ENCODE measurements at regions of chr6 and their contacts with region 1.

Region 1: DNA sequence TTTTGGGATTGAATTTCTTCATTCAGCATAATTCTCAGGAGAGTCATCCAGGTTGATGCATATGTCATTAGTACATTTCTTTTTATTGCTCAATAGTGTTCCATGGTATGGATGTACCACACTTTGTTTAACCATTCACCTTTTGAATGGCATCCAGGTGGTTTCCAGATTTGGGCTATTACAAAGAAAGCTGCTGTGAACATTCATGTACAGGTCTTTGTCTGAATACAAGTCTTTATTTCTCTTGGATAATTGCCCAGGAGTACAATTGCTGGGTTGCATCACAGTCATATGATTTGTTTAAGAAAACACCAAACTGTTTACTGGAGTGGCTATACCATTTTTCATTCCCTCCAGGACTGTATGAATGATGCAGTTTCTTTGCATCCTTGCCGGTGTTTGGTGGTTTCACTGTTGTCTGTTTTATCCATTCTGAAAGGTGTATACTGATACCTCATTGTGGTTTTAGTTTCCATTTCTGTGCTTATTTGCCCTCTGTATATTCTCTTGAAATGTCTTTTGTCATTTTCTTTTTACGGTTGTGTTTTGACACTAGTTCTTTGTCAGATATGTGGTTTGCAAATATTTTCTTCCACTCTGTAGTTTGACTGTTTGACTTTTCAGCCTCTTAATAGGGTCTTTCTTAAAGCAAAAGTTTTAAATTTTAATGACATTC is 8.8 kb downstream of the CDKAL1 start:
- DNase-seq: peak; percentile 44
- H3K4me3 Mint-ChIP-seq: no peak overlapping the region
- H3K27ac Mint-ChIP-seq: peak overlapping the region; percentile 42
- H3K4me1 Mint-ChIP-seq: peaks cover 44% of the 10 kb centered on the region
- H3K27me3 Mint-ChIP-seq: no peaks in the 10 kb centered on the region

Region 2: GRCh38 chr6:19193624-19194023 is 1349.4 kb before region 1 on chr6:
- CTCF ChIA-PET with region 1: no interaction called
- POLR2A ChIA-PET with region 1: no interaction called
- intact Hi-C with region 1: no loop called
- DNase-seq: no peak
- H3K4me3 Mint-ChIP-seq: no peak overlapping the region
- H3K27ac Mint-ChIP-seq: no peak overlapping the region
- H3K4me1 Mint-ChIP-seq: no peaks in the 10 kb centered on the region
- H3K27me3 Mint-ChIP-seq: no peaks in the 10 kb centered on the region

Region 3: GRCh38 chr6:20497216-20498040 is 45.6 kb before region 1 on chr6:
- CTCF ChIA-PET with region 1: no interaction called
- POLR2A ChIA-PET with region 1: no interaction called
- intact Hi-C with region 1: no loop called
- DNase-seq: no peak
- H3K4me3 Mint-ChIP-seq: no peak overlapping the region
- H3K27ac Mint-ChIP-seq: no peak overlapping the region
- H3K4me1 Mint-ChIP-seq: no peaks in the 10 kb centered on the region
- H3K27me3 Mint-ChIP-seq: no peaks in the 10 kb centered on the region

Region 4: DNA sequence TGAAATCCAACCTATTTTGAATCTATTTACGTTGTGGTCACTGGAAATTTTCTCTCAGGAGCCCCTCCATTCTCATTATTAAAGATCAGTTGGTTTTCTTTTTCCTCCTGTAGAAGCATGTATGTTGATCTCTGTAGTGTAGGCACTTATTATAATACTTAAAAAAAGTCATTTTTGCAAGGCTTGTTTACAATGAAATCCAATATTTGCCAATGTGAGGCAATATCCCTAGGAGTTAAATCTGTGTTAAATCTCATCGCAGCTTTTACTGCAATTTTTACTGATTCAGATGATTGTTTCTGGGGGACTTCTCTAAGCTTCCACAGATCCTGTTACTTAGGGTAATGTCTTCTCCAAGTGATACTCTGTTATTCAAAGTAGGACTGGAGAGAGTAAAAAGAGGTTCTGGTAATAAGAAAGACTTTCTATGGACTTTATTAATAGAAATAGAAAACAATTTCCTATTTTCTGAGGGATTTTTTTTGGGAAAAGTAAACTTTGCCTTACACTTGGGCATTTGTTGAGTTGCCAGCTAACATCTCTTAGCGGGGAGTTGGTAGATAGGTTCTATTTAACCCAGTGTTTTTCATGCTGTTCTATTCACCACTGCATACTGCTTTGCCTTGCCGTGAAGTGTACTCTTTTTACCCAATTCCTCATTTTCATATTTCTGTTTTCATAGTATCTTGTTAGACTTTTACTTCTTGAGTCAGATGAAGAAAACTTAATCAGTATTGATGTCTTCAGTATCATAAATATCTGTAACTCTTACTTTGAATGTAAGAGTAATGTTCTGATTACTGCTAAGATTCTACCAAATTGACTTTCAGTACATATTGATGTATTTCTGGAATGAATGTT is 39.8 kb after region 1 on chr6:
- CTCF ChIA-PET with region 1: no interaction called
- POLR2A ChIA-PET with region 1: no interaction called
- intact Hi-C with region 1: loop called (anchors 1 kb)
- DNase-seq: no peak
- H3K4me3 Mint-ChIP-seq: no peak overlapping the region
- H3K27ac Mint-ChIP-seq: no peak overlapping the region
- H3K4me1 Mint-ChIP-seq: peaks cover 28% of the 10 kb centered on the region
- H3K27me3 Mint-ChIP-seq: no peaks in the 10 kb centered on the region

Region 5: DNA sequence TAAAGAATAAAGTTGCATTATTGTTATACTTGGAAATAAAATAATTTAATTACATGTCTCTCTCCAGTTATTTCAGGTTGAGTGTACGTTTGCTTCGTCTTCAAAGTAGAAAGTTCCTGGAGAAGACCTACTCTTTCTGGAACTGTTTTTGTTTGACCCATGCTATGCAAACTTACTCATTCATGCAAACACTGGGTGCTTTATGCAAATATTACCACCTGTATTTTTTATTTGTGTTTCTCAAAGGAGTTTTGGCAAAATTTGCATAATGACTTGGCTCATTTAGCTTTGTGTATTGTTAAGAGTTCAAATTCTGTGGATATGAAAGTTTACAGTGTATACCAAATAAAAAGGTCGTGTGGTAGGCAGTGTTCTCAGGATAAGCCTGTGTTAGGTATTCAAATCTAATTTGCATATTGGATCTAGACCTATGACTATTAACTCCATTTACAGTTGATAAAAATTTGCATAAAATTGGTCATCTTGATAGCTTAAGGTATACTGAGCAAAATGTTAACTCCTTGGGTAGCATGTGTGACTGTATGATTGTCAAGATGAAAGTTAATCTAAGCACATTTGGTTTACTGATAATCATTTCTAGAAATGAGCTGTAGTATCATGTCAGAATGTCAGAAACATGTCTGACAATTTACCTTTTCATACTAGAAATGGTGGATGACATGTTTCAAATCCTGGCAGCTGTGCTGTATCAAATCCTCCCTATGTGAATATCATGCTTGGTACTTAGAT is 56.4 kb after region 1 on chr6:
- CTCF ChIA-PET with region 1: no interaction called
- POLR2A ChIA-PET with region 1: interaction called, 3 read pairs
- intact Hi-C with region 1: loop called (anchors 1 kb)
- DNase-seq: no peak
- H3K4me3 Mint-ChIP-seq: no peak overlapping the region
- H3K27ac Mint-ChIP-seq: no peak overlapping the region
- H3K4me1 Mint-ChIP-seq: peaks cover 11% of the 10 kb centered on the region
- H3K27me3 Mint-ChIP-seq: no peaks in the 10 kb centered on the region

Region 6: GRCh38 chr6:20708367-20709124 is 165.5 kb after region 1 on chr6:
- CTCF ChIA-PET with region 1: no interaction called
- POLR2A ChIA-PET with region 1: no interaction called
- intact Hi-C with region 1: loop called (anchors 1 kb)
- DNase-seq: peak; percentile 41
- H3K4me3 Mint-ChIP-seq: no peak overlapping the region
- H3K27ac Mint-ChIP-seq: no peak overlapping the region
- H3K4me1 Mint-ChIP-seq: peaks cover 52% of the 10 kb centered on the region
- H3K27me3 Mint-ChIP-seq: no peaks in the 10 kb centered on the region

Region 7: GRCh38 chr6:20877008-20877937 is 334.2 kb after region 1 on chr6:
- CTCF ChIA-PET with region 1: no interaction called
- POLR2A ChIA-PET with region 1: no interaction called
- intact Hi-C with region 1: loop called (anchors 1 kb)
- DNase-seq: peak; percentile 65
- H3K4me3 Mint-ChIP-seq: no peak overlapping the region
- H3K27ac Mint-ChIP-seq: peak overlapping the region; percentile 65
- H3K4me1 Mint-ChIP-seq: peaks cover 18% of the 10 kb centered on the region
- H3K27me3 Mint-ChIP-seq: no peaks in the 10 kb centered on the region

Region 8: DNA sequence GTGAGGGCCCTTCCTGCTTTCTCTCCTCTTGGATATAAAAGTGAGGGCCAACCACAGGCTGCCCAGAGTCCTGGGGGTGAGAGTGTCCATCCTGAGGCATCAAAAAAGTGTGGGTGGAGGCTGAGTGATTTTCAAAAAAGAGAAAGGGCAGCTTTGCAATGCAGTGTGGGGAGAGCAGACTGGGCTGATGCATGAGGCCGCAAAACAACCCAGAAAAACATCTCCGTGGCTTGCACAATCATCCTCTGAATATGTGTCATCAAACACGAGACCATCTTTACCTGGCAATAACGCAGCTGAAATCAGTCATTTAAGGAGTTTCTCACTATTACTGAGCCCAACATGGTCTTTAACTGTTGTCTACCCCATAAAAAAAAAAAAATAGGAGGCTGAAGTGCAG is 859.3 kb after region 1 on chr6:
- CTCF ChIA-PET with region 1: no interaction called
- POLR2A ChIA-PET with region 1: no interaction called
- intact Hi-C with region 1: loop called (anchors 10 kb)
- DNase-seq: peak; percentile 72
- H3K4me3 Mint-ChIP-seq: no peak overlapping the region
- H3K27ac Mint-ChIP-seq: no peak overlapping the region
- H3K4me1 Mint-ChIP-seq: peaks cover 11% of the 10 kb centered on the region
- H3K27me3 Mint-ChIP-seq: peaks cover 17% of the 10 kb centered on the region

Measured in activated CD4-positive, alpha-beta memory T cell treated with anti-CD3 and anti-CD28 coated beads for 36 hours (primary cell).